Esophagus muscularis mucosa (tissue), 4 donors: ENCODE measurements at regions of chr10 and their contacts with region 1.

Region 1: GRCh38 chr10:110137142-110137545 is 70.3 kb upstream of the MXI1 start:
- DNase-seq: peak; percentile 24
- H3K4me3 ChIP-seq: no peak overlapping the region
- H3K27ac ChIP-seq: peak overlapping the region; percentile 53 to 70 (median 58)
- H3K4me1 ChIP-seq: peaks cover 16 to 20% (median 18%) of the 10 kb centered on the region in 4 donors
- H3K27me3 ChIP-seq: no peaks in the 10 kb centered on the region
- CTCF ChIP-seq: peak; percentile 75 to 84 (median 83)
- EP300 ChIP-seq: no peak
- POLR2A ChIP-seq: no peak

Region 2: DNA sequence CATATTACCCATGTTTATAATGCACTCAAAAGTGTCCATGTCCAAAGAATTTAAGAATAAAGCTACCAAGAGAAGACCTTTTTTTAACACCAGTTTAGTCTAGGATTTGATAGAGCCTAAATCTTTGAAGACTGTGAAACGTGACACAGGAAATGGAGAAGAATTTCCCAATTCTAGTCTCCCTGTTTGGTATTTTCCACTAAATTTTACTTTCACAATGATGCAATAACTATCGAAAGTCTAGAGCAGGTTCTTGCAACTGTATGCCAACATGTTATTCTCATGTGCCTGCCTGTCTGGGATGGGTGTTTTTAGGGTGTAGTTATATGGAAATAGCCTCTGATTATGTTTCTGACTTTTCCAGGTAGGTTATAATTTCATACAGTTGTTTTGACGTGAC is 63.4 kb after region 1 on chr10:
- intact Hi-C with region 1: loop called (anchors 2 kb)
- DNase-seq: no peak
- H3K4me3 ChIP-seq: no peak overlapping the region
- H3K27ac ChIP-seq: no peak overlapping the region
- H3K4me1 ChIP-seq: no peaks in the 10 kb centered on the region
- H3K27me3 ChIP-seq: no peaks in the 10 kb centered on the region
- CTCF ChIP-seq: no peak
- EP300 ChIP-seq: no peak
- POLR2A ChIP-seq: no peak

Region 3: DNA sequence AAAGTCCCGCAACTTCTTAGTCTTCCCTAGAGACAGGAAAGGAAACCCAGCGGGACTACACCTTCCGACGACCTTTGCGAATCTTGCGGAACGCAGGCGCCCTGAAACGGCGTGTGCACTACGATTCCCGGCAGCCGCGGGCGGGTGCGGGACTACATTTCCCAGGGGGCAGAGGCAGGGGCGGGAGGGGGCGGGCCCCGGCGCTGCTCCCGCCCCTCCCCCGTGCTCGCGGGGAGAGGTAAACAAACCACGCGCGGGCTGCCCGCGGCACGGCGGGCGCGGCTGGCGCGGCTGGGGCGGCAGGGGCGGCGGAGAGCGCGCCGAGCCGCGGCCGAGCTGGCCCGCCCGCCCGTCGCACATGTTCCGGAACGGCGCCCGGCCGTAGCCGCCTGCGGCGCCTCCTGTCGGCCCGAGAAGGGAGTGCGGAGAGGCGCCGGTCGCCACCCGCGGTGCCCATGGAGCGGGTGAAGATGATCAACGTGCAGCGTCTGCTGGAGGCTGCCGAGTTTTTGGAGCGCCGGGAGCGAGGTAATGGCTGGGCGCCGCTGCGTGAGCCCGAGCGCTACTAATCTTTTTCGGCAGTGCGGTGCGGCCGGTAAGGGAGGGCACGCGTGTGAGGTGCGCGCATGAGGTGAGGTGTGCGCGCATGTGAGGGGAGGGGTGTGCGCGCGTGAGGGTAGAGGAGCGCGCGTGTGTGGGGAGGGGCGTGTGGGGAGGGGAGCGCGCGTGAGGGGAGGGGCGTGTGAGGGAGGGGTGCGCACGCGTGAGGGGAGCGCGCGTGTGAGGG is 88.8 kb after region 1 on chr10:
- intact Hi-C with region 1: loop called (anchors 5 kb)
- DNase-seq: peak; percentile 96
- H3K4me3 ChIP-seq: peak overlapping the region; percentile 81 to 91 (median 86)
- H3K27ac ChIP-seq: peak overlapping the region; percentile 91 to 98 (median 96)
- H3K4me1 ChIP-seq: peaks cover 46 to 69% (median 63%) of the 10 kb centered on the region in 4 donors
- H3K27me3 ChIP-seq: no peaks in the 10 kb centered on the region
- CTCF ChIP-seq: peak; percentile 63 to 78 (median 75)
- EP300 ChIP-seq: no peak
- POLR2A ChIP-seq: no peak

Region 4: DNA sequence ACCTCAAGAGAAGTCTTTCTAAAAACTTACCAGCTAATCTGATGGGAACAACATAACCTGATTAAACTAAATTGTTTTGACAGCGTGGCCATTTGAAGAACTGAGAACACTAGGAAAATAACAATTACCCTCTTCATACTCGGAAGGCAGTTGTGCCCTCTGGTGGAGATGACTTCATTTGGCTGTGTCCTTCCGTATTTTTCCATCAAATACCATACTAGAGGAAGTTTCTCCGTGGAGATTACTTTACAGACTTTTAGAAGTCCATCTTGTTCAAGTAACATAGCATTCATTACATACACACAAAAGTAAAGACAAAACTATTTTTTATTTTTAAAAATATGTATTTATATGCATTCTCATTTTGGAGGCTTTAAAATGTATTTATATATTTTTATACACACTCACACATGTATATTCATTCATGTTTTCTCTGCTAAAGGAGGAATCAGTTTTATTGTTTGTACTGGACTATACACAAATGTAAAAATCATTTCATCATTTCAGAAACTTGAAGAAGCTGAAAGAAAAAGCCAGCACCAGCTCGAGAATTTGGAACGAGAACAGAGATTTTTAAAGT is 142.4 kb after region 1 on chr10:
- intact Hi-C with region 1: loop called (anchors 2 kb)
- DNase-seq: no peak
- H3K4me3 ChIP-seq: peak overlapping the region in 2 of 4 donors; percentile 2 to 17
- H3K27ac ChIP-seq: peak overlapping the region; percentile 42 to 81 (median 63)
- H3K4me1 ChIP-seq: peaks cover 44 to 71% (median 62%) of the 10 kb centered on the region in 4 donors
- H3K27me3 ChIP-seq: no peaks in the 10 kb centered on the region
- CTCF ChIP-seq: peak; percentile 77 to 85 (median 80)
- EP300 ChIP-seq: no peak
- POLR2A ChIP-seq: no peak

Region 5: DNA sequence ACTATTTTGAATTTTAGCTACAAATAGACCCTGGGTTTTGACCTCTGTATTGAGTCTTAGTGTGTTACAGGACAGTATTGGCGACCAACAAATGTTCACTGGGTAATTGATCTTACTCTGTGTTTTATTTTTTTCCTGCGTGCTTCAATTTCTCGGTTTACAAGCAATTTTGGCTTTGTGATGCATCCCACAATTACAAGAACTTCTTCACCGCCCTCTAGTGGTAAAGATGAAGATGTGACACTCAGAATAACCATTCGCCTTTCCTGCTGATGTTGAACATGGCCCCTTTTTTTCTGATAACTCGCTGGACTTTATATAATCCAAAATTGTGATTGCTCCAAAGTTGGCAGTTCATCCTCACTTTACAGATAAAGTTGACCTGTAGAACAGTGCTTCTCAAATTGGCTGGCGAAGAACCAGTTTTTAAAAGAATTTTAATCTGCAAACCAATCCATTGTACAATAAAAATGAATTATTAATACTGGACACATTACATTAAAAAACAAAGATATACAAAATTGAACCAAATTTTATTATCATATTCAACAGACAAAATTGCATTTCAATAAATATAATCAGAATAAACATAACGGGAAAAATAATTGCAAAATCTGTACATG is 410.1 kb after region 1 on chr10:
- intact Hi-C with region 1: loop called (anchors 5 kb)
- DNase-seq: peak; percentile 14
- H3K4me3 ChIP-seq: no peak overlapping the region
- H3K27ac ChIP-seq: no peak overlapping the region
- H3K4me1 ChIP-seq: peaks cover 0 to 5% (median 0%) of the 10 kb centered on the region in 4 donors
- H3K27me3 ChIP-seq: peaks cover 0 to 2% (median 0%) of the 10 kb centered on the region in 4 donors
- CTCF ChIP-seq: peak; percentile 76 to 82 (median 76)
- EP300 ChIP-seq: no peak
- POLR2A ChIP-seq: no peak